ENCODE measurements at regions of chr2 and their contacts with region 1.

Region 1: DNA sequence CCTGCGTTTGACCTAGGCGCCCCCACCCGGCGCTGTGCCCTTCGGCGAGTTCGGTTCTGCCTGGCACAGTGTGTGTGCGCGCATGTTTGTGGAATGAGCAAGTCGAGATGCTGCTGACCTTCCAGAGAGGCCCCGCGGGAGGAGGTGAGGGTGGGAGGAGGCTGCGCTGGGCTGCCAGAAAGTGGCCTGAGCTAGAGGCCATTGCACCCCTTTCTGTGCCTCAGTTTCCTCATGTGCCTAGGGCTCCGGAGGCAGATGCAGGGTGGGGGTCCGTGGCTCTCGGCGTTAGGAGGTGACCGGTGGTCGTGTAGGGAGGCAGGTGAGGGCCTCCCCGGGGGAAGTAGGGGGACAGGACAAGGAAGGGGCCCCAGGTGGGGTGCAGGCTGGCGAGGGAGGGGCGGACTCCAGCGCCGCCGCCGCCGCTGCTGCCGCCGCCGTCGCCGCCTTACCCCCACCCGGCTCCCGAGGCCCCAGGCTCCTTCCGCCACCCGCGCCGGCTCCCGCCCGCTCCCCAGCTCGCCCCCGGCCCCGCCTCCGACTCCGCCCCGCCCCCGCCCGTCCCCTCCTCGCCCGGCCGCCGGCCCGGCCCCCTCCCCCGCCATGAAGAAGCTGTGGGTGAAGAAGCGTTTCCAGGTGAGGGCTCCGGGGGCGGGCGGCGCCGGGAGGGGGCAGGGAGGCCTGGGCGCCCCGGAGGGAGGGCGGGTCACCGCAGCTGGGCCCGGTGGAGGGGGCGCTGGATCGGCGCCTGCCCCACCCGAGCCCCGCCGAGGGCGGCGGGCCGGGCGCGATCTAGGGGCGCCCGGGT is 7.0 kb downstream of the SPEG start:
- DNase-seq: peak; percentile 98
- H3K4me3 ChIP-seq: peak overlapping the region; percentile 67 to 76
- H3K27ac ChIP-seq: peak overlapping the region; percentile 52 to 84; a peak in 3 of 4 replicates
- H3K4me1 ChIP-seq: peaks cover 45 to 49% of the 10 kb centered on the region in 2 experiments
- H3K27me3 ChIP-seq: no peaks in the 10 kb centered on the region
- CTCF ChIP-seq: no peak; the same call in 1 of the 2 replicates
- EP300 ChIP-seq: no peak
- RAD21 ChIP-seq: no peak

Region 2: DNA sequence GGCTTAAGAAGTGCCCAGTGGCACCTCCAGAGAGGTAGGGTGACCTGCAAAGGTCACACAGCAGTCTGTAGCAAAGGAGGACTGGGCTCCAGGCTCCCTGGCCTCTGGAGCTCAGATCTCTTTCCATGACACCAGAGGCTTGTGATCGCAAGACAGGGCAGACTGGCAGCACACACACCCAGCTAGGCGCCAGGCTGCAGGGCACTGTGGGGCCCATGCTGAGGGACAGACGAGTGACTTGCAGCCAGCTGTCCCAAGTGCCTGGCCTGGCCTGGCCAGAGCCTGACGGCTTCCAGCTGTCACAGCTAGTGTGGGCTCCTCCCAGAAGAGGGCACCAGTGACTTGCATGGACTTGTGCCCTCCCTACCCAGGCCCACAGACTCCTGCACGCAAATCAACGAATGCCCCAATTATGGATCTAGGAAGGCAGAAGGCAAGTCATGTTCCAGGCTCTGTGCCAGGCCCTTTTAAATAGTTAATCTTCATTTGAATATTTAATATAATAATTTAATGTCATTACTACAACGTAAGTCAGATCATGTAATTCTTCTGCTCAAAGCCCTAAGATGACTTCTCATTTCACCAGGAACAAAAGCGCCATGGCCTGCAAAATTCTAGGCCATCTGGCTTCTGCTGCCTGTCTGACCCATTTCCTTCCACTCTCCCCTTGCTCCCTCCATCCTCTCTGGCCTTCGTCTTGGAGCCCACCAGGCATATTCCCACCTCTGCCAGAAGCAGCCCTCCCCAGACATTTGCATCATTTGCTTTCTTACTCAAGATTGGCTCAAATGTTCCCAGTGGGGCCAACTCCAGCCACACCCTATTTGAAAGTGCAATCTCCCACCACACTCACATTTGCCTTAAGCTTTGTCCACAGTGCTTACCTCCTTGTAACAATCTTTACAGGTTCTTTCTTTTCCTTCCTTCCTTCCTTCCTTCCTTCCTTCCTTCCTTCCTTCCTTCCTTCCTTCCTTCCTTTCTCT is 10.7 kb before region 1 on chr2:
- CTCF ChIA-PET with region 1: interaction called, 14 read pairs
- POLR2A ChIA-PET with region 1: no interaction called
- DNase-seq: peak; percentile 89
- H3K4me3 ChIP-seq: no peak overlapping the region
- H3K27ac ChIP-seq: peak overlapping the region in 1 of 2 experiments; percentile 77; a peak in 2 of 4 replicates
- H3K4me1 ChIP-seq: peaks cover 0 to 13% of the 10 kb centered on the region in 2 experiments; a peak in 1 of 4 replicates
- H3K27me3 ChIP-seq: no peaks in the 10 kb centered on the region
- CTCF ChIP-seq: peak; percentile 50
- EP300 ChIP-seq: 0 out of 4 replicates have a peak, but pooled peaks of 1 of the 2 experiments have one; percentile 10
- RAD21 ChIP-seq: peak; percentile 85